HEK293T (cell line): ENCODE measurements at regions of chr7 and their contacts with region 1.

Region 1: DNA sequence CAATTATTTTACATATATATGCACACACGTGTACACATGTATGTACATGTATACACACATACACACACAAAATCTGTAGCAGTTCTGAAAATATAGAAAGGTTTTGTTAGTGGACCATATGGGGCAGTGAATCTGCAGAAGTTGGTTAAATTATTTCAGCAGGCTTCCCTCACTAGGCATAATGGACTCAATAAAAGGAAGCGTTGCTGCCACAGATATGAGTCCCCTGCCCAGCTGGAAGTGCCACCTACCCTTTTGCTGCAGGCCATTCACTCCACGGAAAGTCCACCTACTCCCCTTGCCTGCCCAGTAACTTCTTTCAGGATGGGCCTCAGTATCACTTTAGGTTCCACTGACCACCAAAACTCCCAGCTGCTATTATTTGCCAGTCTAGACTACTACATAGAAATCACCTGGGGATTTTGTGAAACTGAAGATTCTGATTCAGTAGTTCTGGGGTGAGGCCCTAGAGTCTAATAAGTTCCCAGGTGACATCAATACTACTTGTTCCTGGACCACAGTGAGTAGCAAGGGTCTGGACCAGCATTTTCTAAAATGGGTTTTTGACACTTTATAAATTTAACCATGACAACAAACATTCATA is 29.3 kb upstream of the CROT start:
- DNase-seq: no peak

Region 2: DNA sequence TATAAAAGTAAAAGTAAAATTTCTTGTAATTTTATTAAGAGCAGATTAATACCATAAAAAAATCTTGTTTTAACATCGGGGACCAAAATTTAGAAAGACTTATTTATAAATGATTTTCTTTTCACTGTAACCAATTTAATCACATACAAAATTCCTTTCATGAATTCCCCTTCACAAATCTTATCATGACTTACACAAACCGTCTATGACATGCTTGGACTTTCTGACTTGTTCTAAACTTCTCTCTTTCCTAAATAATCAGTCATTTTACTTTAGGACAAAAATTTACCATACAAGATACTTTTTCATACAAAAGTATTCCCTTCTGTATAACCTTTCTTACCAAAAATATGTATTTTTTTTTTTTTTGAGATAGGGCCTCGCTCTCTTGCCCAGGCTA is 38.5 kb after region 1 on chr7:
- CTCF ChIA-PET with region 1: no interaction called
- POLR2A ChIA-PET with region 1: no interaction called
- DNase-seq: no peak

Region 3: DNA sequence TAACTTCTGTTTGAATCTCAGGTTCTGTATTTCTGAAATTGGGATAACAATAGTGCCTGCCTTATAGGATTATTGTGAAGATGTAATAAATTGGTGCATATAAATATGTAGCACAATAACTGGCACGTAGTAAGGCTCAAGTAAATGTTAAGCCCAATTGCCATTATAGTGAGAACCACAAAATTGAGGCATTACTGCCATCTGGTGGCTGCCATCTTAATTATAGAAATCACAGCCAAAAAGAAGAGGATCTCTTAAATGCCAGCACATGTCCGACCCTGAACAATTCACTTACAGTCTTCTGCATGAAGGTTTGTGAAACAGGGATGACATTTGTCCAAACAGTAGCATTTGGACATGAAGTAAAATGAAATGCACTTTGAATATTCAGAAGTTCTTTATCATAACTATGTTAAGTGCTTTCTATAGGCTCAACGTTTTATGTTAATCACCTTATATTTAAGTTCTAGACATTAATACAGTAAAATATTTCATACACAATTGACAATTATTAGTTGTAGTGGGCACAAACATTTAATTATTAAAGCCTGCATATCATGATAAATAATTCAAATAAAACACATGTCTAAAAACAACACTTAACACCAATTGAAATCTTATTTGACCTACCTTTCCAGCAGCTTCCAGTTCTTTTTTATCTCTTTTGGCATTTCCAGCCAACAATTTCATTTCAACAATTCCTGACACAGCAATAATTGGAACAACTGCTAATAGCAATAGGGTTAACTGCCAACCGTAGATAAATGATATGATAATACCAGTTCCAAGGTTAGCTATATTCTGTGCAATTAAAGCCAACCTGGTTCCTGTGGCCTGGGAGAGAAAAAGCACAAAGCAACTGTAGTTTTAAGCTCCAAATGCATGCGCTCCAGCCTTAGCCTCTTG is 100.7 kb after region 1 on chr7:
- CTCF ChIA-PET with region 1: interaction called, 10 read pairs
- POLR2A ChIA-PET with region 1: no interaction called
- DNase-seq: peak; percentile 54